Upper lobe of right lung (tissue), 1 donor: ENCODE measurements at regions of chr1 and their contacts with region 1.

Region 1: GRCh38 chr1:84569216-84569615 is 5.0 kb downstream of the CTBS start:
- DNase-seq: no peak
- ATAC-seq: no peak
- H3K4me3 ChIP-seq: no peak overlapping the region
- H3K27ac ChIP-seq: no peak overlapping the region
- H3K4me1 ChIP-seq: peaks cover 14% of the 10 kb centered on the region
- H3K27me3 ChIP-seq: no peaks in the 10 kb centered on the region
- CTCF ChIP-seq: no peak

Region 2: DNA sequence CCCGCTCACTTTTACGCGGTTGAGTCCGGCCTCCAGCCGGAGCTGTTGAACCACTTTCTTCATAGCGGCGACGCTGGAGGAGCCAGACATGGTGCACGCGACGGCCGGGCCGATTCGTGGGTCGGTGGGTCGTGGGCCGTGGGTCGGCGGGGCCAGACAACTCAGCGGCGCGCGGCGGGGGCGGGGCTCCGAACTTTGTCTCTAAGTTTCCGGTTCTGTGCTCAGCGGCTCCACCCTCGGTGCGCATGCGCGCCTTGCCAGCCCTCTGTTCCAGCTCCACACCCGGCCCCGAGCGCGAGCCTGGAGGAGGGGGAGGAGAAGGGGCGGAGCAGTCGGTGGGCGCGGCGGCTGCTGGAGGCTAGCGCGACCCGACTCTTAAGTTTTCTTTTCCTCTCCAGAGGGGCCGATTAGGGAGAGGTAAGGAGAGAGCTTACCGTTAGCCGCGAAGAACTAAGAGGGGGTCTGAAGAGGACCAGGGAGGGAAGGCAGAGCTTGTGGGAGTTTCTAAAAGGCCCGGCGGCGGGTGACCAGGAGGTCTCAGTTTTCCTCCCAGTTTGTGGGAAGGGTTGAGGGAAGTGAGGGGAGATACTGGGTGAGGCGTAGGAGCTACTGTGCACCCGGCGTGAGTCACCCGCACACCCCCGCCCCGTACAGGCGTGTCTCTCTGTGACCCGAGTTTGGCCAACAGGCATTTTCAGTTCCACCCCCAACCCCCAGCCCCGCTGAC is 63.1 kb before region 1 on chr1 and contains the starts of genes GNG5 and SPATA1:
- intact Hi-C with region 1: loop called (anchors 10 kb)
- DNase-seq: peak; percentile 100
- ATAC-seq: peak; percentile 95
- H3K4me3 ChIP-seq: peak within 1 kb of the TSS; percentile 79
- H3K27ac ChIP-seq: peak within 1 kb of the TSS; percentile 97
- H3K4me1 ChIP-seq: peaks cover 32% of the 10 kb centered on the region
- H3K27me3 ChIP-seq: no peaks in the 10 kb centered on the region
- CTCF ChIP-seq: peak; percentile 6
- total RNA-seq, gene GNG5: 133 TPM
- total RNA-seq, gene SPATA1: 3.4 TPM